ENCODE measurements at regions of chr19 and their contacts with region 1.

Region 1: DNA sequence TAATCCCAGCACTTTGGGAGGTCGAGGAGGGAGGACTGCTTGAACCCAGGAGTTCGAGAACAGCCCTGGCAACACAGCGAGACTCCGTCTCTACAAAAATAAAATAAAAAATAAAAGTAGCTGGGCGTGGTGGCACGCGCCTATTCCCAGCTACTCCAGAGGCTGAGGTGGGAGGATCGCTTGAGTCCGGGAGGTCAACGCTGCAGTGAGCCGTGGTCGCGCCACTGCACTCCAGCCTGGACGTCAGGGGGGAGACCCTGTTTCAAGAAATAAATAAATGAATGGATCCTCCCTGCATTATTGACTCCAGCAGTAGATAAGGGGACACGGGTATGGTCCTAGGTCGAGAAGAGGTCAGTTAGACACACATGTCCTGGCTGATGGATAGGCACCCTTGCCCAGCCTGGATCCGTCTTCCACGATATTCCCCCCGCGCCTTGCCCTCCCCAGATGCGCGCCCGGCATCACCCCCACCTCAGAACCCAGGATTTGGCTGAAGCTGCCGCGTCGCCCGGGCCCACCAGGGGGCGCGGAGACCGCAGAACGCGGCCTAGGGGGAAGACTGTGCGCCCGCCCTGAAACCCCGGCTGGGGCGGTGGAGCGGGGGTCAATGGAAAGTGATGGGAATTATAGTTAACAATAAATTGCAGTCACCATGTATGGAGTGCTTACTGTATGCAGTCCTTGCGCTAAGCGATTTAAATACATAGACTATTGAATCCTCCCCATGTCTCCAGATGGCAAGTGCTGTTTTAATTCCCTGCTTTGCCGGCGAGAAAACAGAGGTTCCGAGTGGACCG is 2.1 kb upstream of the HOOK2 start:
- DNase-seq: peak; percentile 87
- H3K4me3 Mint-ChIP-seq: peak overlapping the region; percentile 76
- H3K27ac Mint-ChIP-seq: peak overlapping the region; percentile 93
- H3K4me1 Mint-ChIP-seq: peaks cover 20% of the 10 kb centered on the region
- H3K27me3 Mint-ChIP-seq: no peaks in the 10 kb centered on the region
- CTCF ChIP-seq: peak; percentile 79

Region 2: GRCh38 chr19:12736995-12737834 is 40.2 kb before region 1 on chr19 and contains the start of gene GET3:
- CTCF ChIA-PET with region 1: no interaction called
- intact Hi-C with region 1: no loop called
- DNase-seq: peak; percentile 88
- H3K4me3 Mint-ChIP-seq: peak within 1 kb of the TSS; percentile 90
- H3K27ac Mint-ChIP-seq: peak within 1 kb of the TSS; percentile 95
- H3K4me1 Mint-ChIP-seq: peaks cover 19% of the 10 kb centered on the region
- H3K27me3 Mint-ChIP-seq: no peaks in the 10 kb centered on the region
- CTCF ChIP-seq: no peak
- total RNA-seq, gene GET3: 52.2 and 53.8 TPM in 2 replicates

Region 3: GRCh38 chr19:12791238-12792021 is 14.0 kb after region 1 on chr19 and contains the start of gene JUNB:
- CTCF ChIA-PET with region 1: interaction called, 17 read pairs
- intact Hi-C with region 1: loop called (anchors 1 kb)
- DNase-seq: peak; percentile 95
- H3K4me3 Mint-ChIP-seq: peak within 1 kb of the TSS; percentile 86
- H3K27ac Mint-ChIP-seq: peak within 1 kb of the TSS; percentile 98
- H3K4me1 Mint-ChIP-seq: peaks cover 35% of the 10 kb centered on the region
- H3K27me3 Mint-ChIP-seq: no peaks in the 10 kb centered on the region
- CTCF ChIP-seq: no peak
- total RNA-seq, gene JUNB: 113 and 116 TPM in 2 replicates

Region 4: DNA sequence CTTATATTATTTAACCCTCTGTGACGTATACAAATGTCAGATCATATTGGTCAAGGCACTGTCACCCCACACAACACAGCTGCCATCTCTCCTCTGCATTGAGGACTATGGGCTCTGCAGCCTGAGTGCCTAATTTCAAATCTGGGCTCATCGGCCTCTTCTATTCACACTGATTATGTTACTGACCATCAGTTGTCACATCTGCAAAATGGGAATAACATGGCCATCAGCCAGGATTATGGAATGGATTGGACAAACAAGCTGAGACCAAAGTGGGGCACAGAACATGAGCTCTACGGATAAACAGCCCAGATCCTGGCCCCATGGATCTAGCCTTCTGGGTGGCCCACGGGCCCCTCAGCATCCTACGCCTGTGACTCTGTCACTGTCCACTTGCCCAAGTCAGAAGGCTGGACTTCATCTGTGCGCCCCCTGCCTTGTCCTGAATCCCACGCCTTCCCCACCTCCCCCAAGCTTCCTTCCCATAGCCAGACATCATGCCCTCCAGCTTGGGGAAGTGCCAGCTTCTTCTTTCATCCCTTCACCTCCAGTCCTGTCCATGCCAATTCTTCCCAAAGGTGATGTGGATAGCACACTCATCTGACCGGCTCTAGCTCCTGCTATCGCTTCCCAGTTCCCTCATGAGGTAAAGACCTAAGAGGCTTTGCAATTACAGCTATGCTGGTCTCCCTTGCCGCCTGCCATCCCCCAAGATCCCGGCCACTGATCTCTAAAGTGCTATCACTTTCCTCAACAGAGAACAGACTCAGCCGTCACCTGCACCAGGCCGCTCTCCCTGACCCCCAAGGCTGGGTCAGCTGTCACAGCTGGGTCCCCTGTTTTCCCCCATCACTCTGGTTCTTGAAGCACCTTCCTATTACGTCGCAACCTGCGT is 155.2 kb after region 1 on chr19:
- CTCF ChIA-PET with region 1: no interaction called
- intact Hi-C with region 1: no loop called
- DNase-seq: no peak
- H3K4me3 Mint-ChIP-seq: peak overlapping the region; percentile 90
- H3K27ac Mint-ChIP-seq: peak overlapping the region; percentile 72
- H3K4me1 Mint-ChIP-seq: peaks cover 15% of the 10 kb centered on the region
- H3K27me3 Mint-ChIP-seq: no peaks in the 10 kb centered on the region
- CTCF ChIP-seq: no peak

Region 5: GRCh38 chr19:13060964-13061927 is 283.8 kb after region 1 on chr19:
- CTCF ChIA-PET with region 1: no interaction called
- intact Hi-C with region 1: no loop called
- DNase-seq: peak; percentile 80
- H3K4me3 Mint-ChIP-seq: peak overlapping the region; percentile 66
- H3K27ac Mint-ChIP-seq: peak overlapping the region; percentile 20
- H3K4me1 Mint-ChIP-seq: no peaks in the 10 kb centered on the region
- H3K27me3 Mint-ChIP-seq: peaks cover 16% of the 10 kb centered on the region
- CTCF ChIP-seq: peak; percentile 66

Measured in Calu3 (cell line).